Dorsolateral prefrontal cortex (tissue), 120 donors: ENCODE measurements at regions of chr19 and their contacts with region 1.

Region 1: GRCh38 chr19:40798223-40798996 is 581 bp upstream of the EGLN2 start:
- DNase-seq: peak; percentile 99 to 100 (median 100)
- H3K4me3 ChIP-seq: peak overlapping the region; percentile 38 to 99 (median 93)
- H3K27ac ChIP-seq: peak overlapping the region; percentile 79 to 99 (median 96)
- H3K27me3 ChIP-seq: no peaks in the 10 kb centered on the region
- CTCF ChIP-seq: peak; percentile 13 to 68 (median 48)

Region 2: DNA sequence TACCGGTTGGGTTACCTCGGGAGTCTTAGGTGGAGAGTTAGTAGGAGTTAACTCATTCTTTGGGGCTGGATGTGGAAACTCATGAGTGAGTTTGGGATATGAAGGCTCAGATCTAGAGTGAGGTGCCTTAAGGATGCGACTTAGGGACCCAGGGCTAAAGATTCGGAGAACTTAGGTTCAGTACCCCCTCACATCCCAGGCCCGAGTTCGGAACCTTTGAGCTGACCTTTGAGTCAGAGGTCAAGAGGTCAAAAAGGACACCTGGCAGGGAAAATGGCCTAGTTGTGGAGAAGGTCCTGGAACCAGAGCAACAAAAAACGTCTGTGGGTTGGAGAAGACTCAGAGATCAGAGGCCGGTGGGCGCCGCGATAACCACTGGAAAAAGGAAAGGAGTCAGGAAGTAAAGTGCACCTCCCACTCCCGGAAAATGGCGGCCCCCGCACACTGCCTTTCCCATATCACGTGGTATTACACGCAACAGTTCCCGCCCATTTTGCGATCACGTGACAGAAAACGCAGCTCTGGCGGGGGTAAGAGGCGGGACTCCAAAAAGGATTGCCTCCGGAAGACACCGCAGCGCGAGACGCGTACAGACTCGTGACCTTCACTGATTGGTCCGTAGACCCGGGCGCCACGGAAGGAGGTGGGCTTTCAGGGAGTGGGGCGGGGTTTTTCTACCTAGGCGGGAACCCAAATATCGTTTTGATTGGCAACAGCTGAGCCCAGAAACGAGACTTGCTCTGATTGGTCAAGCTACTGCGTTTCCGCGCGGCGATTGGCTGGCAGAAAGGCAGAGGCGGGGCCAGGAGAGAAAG is 48.1 kb before region 1 on chr19 and contains the start of gene ACTMAP:
- intact Hi-C with region 1: loop called (anchors 2 to 5 kb)
- DNase-seq: peak; percentile 99 to 100 (median 100)
- H3K4me3 ChIP-seq: peak within 1 kb of the TSS; percentile 60 to 99 (median 81)
- H3K27ac ChIP-seq: peak within 1 kb of the TSS; percentile 76 to 98 (median 94)
- H3K27me3 ChIP-seq: no peaks in the 10 kb centered on the region
- CTCF ChIP-seq: peak in 5 of 56 donors; percentile 4 to 23 (median 14)
- total RNA-seq, gene ACTMAP: 1.4 to 15.4 (median 5.6) TPM

Region 3: DNA sequence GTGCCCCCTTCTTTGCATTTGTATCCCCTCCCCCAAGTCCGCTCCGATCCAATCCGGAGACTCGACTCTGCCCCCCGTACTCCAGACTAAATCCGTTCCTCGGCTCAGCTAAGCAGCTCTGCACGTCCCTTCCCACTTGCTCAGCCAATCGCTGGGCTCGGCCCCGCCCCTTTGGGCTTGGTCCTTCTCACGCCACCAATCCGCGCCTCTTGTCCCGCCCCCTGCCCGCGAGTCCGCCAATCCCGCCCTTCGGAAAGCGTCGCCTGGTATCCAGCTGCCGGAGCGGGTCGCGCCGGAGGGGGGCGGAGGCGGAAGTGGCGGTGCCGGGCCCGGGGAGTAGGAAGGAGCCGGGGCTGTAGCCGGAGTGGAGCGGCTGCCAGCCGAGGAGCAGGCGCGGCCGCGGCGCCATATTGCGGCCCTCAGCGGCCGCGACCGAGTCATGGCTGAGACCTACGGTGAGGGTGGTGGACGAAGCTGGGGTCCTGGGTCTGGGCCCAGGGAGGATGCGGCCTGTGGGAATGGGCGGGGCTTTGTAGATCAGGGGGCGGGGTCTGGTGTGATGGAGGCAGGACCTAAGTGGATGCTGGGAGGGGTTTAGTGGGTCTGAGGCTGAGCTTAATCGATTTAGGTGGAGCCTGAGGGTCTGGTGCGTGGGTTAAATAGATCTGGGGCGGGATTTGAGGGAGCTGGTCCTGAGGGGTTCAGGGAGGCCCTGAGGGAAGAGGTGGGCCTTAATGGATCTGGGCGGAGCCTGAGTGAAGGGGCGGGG is 20.3 kb before region 1 on chr19 and contains the start of gene RAB4B:
- intact Hi-C with region 1: loop called in 1 of 2 experiments (anchors 1 kb)
- DNase-seq: peak; percentile 99 to 100 (median 100)
- H3K4me3 ChIP-seq: peak within 1 kb of the TSS; percentile 57 to 98 (median 80)
- H3K27ac ChIP-seq: peak within 1 kb of the TSS; percentile 63 to 100 (median 97)
- H3K27me3 ChIP-seq: no peaks in the 10 kb centered on the region
- CTCF ChIP-seq: peak in 18 of 56 donors; percentile 4 to 44 (median 25)
- total RNA-seq, gene RAB4B: 42.2 to 113 (median 77.4) TPM

Region 4: DNA sequence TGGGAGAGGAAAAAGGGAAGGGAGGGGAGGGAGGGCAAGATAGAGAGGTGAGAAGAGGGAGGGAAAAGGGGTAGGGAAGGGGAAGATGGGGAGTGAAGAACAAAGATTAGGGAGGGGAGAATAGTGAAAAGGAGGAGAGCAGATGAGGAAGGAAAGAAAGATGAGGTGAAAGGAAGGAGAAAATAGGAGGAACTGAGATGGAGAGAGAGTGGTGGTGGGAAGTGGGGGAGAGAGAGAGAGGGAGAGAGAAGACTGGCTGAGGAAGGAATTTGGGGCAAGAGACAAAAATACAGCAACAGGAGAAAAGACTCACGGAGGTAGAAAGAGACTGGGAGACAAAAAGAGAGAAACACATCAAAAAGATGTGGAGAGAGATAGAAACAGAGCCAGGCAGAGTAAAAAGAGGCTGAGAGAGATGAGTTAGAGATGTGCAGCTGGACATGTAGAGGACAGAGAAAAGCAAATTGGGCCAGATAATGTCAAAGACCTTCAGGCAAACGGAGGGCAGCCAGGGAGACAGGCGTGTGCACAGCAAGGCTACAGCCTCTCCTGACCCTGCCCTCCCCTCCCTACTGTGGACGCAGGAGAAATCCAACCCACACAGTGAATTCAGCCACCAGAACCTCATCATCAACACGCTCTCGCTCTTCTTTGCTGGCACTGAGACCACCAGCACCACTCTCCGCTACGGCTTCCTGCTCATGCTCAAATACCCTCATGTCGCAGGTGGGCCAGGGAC is 143.2 kb after region 1 on chr19:
- intact Hi-C with region 1: no loop called
- DNase-seq: no peak
- H3K4me3 ChIP-seq: no peak overlapping the region
- H3K27ac ChIP-seq: no peak overlapping the region
- H3K27me3 ChIP-seq: no peaks in the 10 kb centered on the region
- CTCF ChIP-seq: no peak

Region 5: GRCh38 chr19:41263850-41264580 is 465.6 kb after region 1 on chr19 and contains the start of gene HNRNPUL1:
- intact Hi-C with region 1: loop called in 1 of 2 experiments (anchors 2 kb)
- DNase-seq: peak; percentile 96 to 99 (median 98)
- H3K4me3 ChIP-seq: peak within 1 kb of the TSS; percentile 67 to 100 (median 97)
- H3K27ac ChIP-seq: peak within 1 kb of the TSS; percentile 87 to 100 (median 98)
- H3K27me3 ChIP-seq: no peaks in the 10 kb centered on the region
- CTCF ChIP-seq: peak in 40 of 56 donors; percentile 13 to 54 (median 32)
- total RNA-seq, gene HNRNPUL1: 92.7 to 156 (median 118) TPM